Activated B cell treated with CpG ODN at 0.5 μM for 24 hours (primary cell): ENCODE measurements at regions of chr19 and their contacts with region 1.

Region 1: GRCh38 chr19:2944775-2945574 is at the start of gene ZNF77:
- DNase-seq: peak; percentile 96
- ATAC-seq: peak; percentile 98
- H3K4me3 Mint-ChIP-seq: peak within 1 kb of the TSS; percentile 96
- H3K27ac Mint-ChIP-seq: peak within 1 kb of the TSS; percentile 95
- H3K4me1 Mint-ChIP-seq: peaks cover 31% of the 10 kb centered on the region
- H3K27me3 Mint-ChIP-seq: no peaks in the 10 kb centered on the region
- CTCF ChIP-seq: no peak
- total RNA-seq, gene ZNF77: 5.2 and 6.7 TPM in 2 replicates

Region 2: GRCh38 chr19:2726904-2727639 is 217.9 kb before region 1 on chr19:
- CTCF ChIA-PET with region 1: no interaction called
- POLR2A ChIA-PET with region 1: interaction called, 13 read pairs
- intact Hi-C with region 1: no loop called
- DNase-seq: no peak
- ATAC-seq: peak; percentile 43
- H3K4me3 Mint-ChIP-seq: no peak overlapping the region
- H3K27ac Mint-ChIP-seq: no peak overlapping the region
- H3K4me1 Mint-ChIP-seq: peaks cover 27% of the 10 kb centered on the region
- H3K27me3 Mint-ChIP-seq: peaks cover 2% of the 10 kb centered on the region
- CTCF ChIP-seq: no peak

Region 3: DNA sequence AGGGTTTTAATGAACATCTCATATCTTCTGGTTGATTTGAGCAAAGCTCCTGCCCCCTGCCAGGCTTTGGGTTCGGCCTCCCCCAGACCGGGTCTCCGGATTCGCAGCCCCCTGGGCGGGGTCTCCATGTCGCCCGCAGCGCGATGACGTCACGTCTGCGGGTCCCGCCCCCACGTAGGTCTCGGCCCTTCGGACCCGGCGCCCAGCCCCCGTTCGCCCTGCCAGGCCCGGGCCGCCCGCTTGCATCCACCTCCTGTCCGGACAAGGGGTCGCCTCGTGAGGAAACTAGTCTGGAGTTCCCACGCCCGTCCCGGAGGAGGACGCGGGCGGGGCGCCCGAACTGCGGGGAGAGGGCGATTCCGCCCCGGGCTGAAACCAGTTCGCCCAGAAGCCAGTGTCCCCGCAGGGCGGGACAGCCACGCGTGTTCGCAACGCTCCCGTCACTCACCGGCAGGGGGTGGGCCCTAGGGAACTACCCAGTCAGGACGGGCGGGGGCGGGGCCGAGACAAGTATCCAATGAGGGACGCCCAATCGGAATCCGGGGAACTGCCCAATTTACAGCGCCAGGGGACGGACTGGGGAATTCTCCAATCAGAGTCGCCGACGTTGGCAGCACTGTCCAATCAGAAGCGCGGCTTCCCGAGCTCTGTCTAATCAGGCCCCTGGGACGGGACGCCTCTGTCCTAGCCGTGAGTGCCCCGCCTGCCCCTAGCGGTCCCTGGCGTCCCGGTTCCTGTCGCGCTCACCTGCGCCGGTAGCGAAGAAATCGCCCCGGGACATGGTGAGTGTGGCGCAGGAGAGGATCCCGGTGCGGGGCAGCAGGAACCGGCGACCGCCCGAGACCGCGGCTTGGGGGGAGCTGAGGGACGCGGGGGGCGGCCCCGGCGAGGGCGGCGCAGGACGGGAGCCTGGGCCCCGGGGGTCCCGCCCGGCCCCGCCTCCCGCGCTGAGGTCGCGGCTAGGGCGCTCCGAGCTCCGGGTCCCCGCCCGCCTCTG is 103.9 kb before region 1 on chr19 and contains the start of gene ZNF555:
- CTCF ChIA-PET with region 1: no interaction called
- POLR2A ChIA-PET with region 1: no interaction called
- intact Hi-C with region 1: loop called (anchors 1 kb)
- DNase-seq: peak; percentile 88
- ATAC-seq: peak; percentile 90
- H3K4me3 Mint-ChIP-seq: peak within 1 kb of the TSS; percentile 92
- H3K27ac Mint-ChIP-seq: peak within 1 kb of the TSS; percentile 83
- H3K4me1 Mint-ChIP-seq: peaks cover 19% of the 10 kb centered on the region
- H3K27me3 Mint-ChIP-seq: no peaks in the 10 kb centered on the region
- CTCF ChIP-seq: no peak
- total RNA-seq, gene ZNF555: 7.4 and 8.4 TPM in 2 replicates

Region 4: DNA sequence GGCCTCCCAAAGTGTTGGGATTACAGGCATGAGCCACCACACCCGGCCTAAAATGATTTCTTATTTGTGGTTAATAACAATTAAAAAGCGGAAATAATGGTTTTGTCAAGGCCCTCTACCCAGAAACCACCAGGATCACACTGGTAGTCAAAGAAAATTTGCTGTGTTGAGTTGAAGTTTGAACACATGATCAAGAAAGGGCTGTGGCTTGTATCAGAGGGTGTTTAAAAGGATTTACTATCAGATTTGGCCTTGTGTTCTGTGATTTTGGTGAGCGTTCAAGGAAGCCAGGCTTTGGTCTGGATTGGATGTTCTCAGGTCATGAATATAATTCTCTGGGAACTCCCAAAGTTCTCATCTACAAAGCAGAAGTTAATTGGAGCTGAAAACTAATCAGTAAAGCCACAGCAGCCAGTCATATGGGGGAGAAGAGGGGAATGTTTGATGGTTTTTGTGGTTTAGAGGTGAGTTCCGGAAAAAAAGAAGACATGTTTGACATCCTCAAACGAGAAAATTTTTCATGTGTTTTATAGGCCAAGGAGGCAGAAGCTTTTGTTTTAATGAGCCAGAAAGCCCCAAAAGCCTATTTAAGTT is 88.4 kb before region 1 on chr19:
- CTCF ChIA-PET with region 1: no interaction called
- POLR2A ChIA-PET with region 1: no interaction called
- intact Hi-C with region 1: no loop called
- DNase-seq: no peak
- ATAC-seq: no peak
- H3K4me3 Mint-ChIP-seq: peak overlapping the region; percentile 1
- H3K27ac Mint-ChIP-seq: peak overlapping the region; percentile 59
- H3K4me1 Mint-ChIP-seq: peaks cover 14% of the 10 kb centered on the region
- H3K27me3 Mint-ChIP-seq: no peaks in the 10 kb centered on the region
- CTCF ChIP-seq: no peak

Region 5: DNA sequence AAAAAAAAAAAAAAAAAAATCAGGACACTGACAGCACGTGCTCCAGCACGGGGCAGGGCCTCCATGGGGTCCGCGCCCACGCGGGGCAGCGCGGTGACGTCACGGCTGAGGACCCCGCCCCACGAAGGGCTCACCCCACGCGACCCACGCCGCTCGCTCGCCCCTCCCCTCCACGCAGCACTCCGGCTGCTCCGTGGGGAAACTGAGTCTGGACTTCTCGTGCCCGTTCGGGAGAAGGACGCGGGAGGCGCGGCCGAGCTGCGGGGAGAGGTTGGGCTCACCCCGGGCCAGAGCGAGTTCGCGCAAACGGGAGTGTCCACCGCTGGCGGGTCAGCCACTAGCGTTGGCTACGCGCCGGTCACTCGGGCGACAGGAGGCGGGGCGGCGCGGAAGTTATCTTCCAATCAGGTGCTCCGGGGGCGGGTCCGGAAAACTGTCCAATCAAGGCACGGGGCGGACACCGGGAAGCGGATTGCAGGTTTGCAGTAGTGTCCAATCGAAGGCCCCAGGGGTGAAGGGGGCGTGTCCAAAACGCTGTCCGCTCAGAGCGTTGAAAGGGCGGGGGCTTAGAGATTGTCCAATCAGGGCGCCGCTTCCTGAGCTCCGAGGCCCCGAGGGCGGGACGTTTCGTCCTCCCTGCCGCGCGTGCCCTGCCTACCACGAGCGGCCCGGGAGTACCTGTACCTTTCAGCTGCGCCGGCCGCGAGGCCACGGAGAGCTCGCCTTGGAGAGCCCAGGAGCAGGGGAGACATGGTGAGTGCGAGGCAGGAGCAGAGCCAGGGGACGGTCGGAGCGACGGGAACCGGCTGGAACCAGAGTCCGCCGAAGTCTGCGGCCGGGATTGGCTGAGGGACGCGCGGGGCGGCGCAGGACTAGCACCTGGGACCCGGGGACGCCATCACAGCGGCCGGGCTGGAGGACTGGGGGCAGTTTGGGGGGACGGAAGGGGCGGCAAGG is 44.4 kb before region 1 on chr19 and contains the start of gene ZNF57:
- CTCF ChIA-PET with region 1: no interaction called
- POLR2A ChIA-PET with region 1: interaction called, 13 read pairs
- intact Hi-C with region 1: loop called (anchors 1 kb)
- DNase-seq: peak; percentile 89
- ATAC-seq: peak; percentile 99
- H3K4me3 Mint-ChIP-seq: peak within 1 kb of the TSS; percentile 99
- H3K27ac Mint-ChIP-seq: peak within 1 kb of the TSS; percentile 87
- H3K4me1 Mint-ChIP-seq: peaks cover 10% of the 10 kb centered on the region
- H3K27me3 Mint-ChIP-seq: no peaks in the 10 kb centered on the region
- CTCF ChIP-seq: no peak
- total RNA-seq, gene ZNF57: 4.6 and 5.3 TPM in 2 replicates